SK-N-SH (cell line): ENCODE measurements at regions of chr13 and their contacts with region 1.

Region 1: DNA sequence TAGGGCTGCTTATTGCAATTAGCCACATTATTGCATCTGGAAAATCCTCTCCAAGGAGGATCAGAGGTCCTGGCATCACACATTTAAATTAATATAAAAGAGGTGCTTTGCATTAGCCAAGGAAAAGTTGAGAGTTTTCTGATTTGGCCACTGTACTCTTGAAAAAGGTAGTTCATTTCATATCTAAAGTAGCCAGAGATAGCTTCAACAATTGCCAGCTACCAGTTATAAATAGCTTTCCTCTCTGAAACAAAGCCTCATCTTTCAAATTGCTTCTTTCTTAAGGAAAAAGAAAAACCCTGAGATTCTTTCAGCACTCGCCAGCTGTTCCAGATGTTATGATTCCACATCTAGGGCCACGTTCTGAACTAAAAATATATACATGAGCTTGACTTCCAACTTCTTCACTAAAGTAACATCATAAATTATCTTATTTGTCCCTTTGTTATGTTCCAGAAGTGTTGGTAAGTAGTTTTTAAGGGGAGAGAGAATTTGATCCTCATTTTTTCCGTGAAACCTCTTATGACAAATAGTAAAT is 69.6 kb downstream of the ERCC5 start:
- DNase-seq: no peak
- H3K4me3 ChIP-seq: no peak overlapping the region
- H3K27ac ChIP-seq: no peak overlapping the region
- H3K4me1 ChIP-seq: no peaks in the 10 kb centered on the region
- H3K27me3 ChIP-seq: no peaks in the 10 kb centered on the region
- CTCF ChIP-seq: no peak
- EP300 ChIP-seq: no peak
- RAD21 ChIP-seq: no peak

Region 2: GRCh38 chr13:102742101-102742500 is 173.4 kb before region 1 on chr13:
- CTCF ChIA-PET with region 1: no interaction called
- POLR2A ChIA-PET with region 1: no interaction called
- DNase-seq: no peak
- H3K4me3 ChIP-seq: no peak overlapping the region
- H3K27ac ChIP-seq: no peak overlapping the region
- H3K4me1 ChIP-seq: no peaks in the 10 kb centered on the region
- H3K27me3 ChIP-seq: no peaks in the 10 kb centered on the region; the same call in 1 of the 2 replicates
- CTCF ChIP-seq: no peak
- EP300 ChIP-seq: no peak
- RAD21 ChIP-seq: no peak

Region 3: GRCh38 chr13:102933122-102933521 is 17.7 kb after region 1 on chr13:
- CTCF ChIA-PET with region 1: interaction called, 13 read pairs
- POLR2A ChIA-PET with region 1: no interaction called
- DNase-seq: no peak
- H3K4me3 ChIP-seq: no peak overlapping the region
- H3K27ac ChIP-seq: no peak overlapping the region
- H3K4me1 ChIP-seq: no peaks in the 10 kb centered on the region; a peak in 1 of 4 replicates
- H3K27me3 ChIP-seq: no peaks in the 10 kb centered on the region
- CTCF ChIP-seq: no peak
- EP300 ChIP-seq: no peak
- RAD21 ChIP-seq: no peak